CD4-positive, alpha-beta T cell (primary cell): ENCODE measurements at regions of chr16 and their contacts with region 1.

Region 1: GRCh38 chr16:67514382-67514828 is 14.2 kb upstream of the RIPOR1 start:
- DNase-seq: peak; percentile 69 to 92 (median 78)
- ATAC-seq: peak; percentile 95
- H3K4me3 ChIP-seq: no peak overlapping the region
- H3K4me3 Mint-ChIP-seq: no peak overlapping the region
- H3K27ac ChIP-seq: no peak overlapping the region
- H3K27ac Mint-ChIP-seq: no peak overlapping the region
- H3K4me1 ChIP-seq: peaks cover 22% of the 10 kb centered on the region
- H3K4me1 Mint-ChIP-seq: peaks cover 16% of the 10 kb centered on the region
- H3K27me3 ChIP-seq: no peaks in the 10 kb centered on the region
- H3K27me3 Mint-ChIP-seq: no peaks in the 10 kb centered on the region
- CTCF ChIP-seq: peak; percentile 78

Region 2: DNA sequence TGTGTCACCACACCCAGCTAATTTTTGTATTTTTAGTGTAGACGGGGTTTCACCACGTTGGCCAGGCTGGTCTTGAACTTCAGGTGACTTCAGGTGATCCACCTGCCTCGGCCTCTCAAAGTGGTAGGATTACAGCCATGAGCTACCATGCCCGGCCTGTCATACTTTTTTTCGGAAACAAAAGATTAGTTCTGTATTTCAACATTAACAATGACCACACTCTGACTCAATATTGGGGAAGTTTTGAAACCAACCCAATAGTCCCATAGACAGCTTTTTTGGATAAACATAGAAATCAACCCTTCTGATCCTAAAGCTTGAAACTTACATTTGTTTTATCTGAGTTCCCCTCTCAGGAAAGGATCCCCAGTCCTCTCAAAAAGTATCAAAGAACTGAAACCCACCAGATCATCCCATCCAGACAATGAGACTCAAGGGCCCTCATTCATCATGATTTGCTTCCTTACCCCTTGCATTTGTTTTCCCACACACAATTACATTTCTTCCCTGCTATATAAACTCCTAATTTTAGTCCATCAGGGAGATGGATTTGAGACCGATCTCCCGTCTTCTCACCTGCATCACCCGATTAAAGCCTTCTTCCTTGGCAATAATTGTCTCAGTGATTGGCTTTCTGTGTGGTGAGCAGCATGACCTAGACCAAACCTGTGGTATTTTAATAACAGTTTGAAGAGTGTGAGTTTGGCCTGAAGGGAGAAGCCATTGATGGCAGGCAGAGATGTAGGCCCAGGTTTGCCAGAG is 23.9 kb before region 1 on chr16:
- CTCF ChIA-PET with region 1: interaction called, 46 read pairs
- POLR2A ChIA-PET with region 1: interaction called, 3 read pairs
- intact Hi-C with region 1: loop called (anchors 1 kb)
- DNase-seq: peak in 3 of 14 experiments; percentile 13 to 48 (median 40)
- ATAC-seq: no peak
- H3K4me3 ChIP-seq: no peak overlapping the region
- H3K4me3 Mint-ChIP-seq: no peak overlapping the region
- H3K27ac ChIP-seq: no peak overlapping the region
- H3K27ac Mint-ChIP-seq: peak overlapping the region; percentile 77
- H3K4me1 ChIP-seq: peaks cover 14% of the 10 kb centered on the region
- H3K4me1 Mint-ChIP-seq: peaks cover 28% of the 10 kb centered on the region
- H3K27me3 ChIP-seq: no peaks in the 10 kb centered on the region
- H3K27me3 Mint-ChIP-seq: no peaks in the 10 kb centered on the region
- CTCF ChIP-seq: no peak

Region 3: DNA sequence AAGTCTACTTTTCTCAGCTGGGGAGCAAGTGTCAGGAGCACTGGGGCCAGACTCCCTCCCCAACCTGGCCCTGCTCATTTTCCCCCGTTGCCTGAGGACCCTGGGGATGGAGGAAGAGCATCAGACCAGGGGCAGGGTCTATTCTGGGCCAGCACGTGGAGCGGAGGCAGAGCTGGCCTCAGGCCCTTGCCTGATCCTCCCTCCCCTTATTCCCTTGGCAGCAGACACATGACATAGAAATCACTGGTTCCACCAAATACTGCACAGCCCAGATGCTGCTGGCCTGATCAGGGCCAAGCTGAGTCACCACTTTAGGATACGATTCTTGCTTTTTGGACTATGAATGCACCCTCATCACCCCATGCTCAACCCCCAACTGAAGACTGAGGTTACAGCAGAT is 15.3 kb before region 1 on chr16:
- CTCF ChIA-PET with region 1: interaction called, 46 read pairs
- POLR2A ChIA-PET with region 1: interaction called, 5 read pairs
- intact Hi-C with region 1: loop called (anchors 1 kb)
- DNase-seq: no peak
- ATAC-seq: no peak
- H3K4me3 ChIP-seq: no peak overlapping the region
- H3K4me3 Mint-ChIP-seq: no peak overlapping the region
- H3K27ac ChIP-seq: no peak overlapping the region
- H3K27ac Mint-ChIP-seq: peak overlapping the region; percentile 32
- H3K4me1 ChIP-seq: peaks cover 14% of the 10 kb centered on the region
- H3K4me1 Mint-ChIP-seq: peaks cover 15% of the 10 kb centered on the region
- H3K27me3 ChIP-seq: no peaks in the 10 kb centered on the region
- H3K27me3 Mint-ChIP-seq: no peaks in the 10 kb centered on the region
- CTCF ChIP-seq: no peak

Region 4: DNA sequence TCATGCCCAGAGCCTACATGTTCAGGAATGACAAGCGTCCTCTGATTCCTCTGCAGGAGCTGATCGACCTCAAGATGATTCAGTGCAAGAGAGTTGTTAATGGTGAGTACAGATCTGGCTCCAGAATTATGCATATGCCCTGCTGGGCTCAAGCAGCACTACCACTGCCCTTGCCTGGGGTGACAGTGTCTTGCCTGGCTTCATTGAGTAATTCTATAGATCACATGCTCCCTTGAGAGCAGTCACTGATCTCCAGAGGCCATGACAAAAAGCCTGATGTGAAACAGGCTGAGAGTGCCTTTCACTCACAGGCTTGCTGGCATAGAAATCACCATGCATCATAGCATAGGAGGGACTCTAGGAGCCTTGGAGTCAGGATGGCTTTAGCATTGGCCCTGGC is 535.0 kb after region 1 on chr16:
- CTCF ChIA-PET with region 1: no interaction called
- POLR2A ChIA-PET with region 1: no interaction called
- intact Hi-C with region 1: loop called in 1 of 2 experiments (anchors 5 kb)
- DNase-seq: no peak
- ATAC-seq: no peak
- H3K4me3 ChIP-seq: no peak overlapping the region
- H3K4me3 Mint-ChIP-seq: no peak overlapping the region
- H3K27ac ChIP-seq: no peak overlapping the region
- H3K27ac Mint-ChIP-seq: no peak overlapping the region
- H3K4me1 ChIP-seq: no peaks in the 10 kb centered on the region
- H3K4me1 Mint-ChIP-seq: peaks cover 5% of the 10 kb centered on the region
- H3K27me3 ChIP-seq: no peaks in the 10 kb centered on the region
- H3K27me3 Mint-ChIP-seq: no peaks in the 10 kb centered on the region
- CTCF ChIP-seq: no peak